Stomach (tissue), 19 donors: ENCODE measurements at regions of chrX and their contacts with region 1.

Region 1: DNA sequence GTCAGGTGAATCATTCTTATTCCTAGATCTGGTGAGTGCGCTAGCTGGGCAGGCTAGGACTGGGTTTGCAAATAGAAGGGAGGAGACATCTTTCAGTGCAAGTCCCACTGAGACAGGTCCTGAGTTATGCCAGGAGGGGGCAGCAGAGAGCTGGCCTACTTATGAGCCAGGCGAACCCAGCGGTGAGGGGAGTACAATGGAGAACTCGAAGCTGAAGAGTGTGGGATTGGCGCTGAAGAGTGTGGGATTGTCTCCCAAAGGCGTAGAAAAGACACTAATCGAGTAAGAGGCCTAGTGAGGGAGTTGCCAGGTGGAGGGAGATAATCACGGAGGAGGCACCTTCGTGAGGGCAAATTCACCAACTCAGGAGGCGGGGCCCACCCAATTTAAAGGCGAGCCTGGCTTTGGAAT is 91.7 kb upstream of the CXorf66 start:
- DNase-seq: peak; percentile 80 to 88
- H3K4me3 ChIP-seq: no peak overlapping the region
- H3K27ac ChIP-seq: no peak overlapping the region
- H3K4me1 ChIP-seq: peaks cover 0 to 5% (median 0%) of the 10 kb centered on the region in 4 donors
- H3K27me3 ChIP-seq: no peaks in the 10 kb centered on the region
- CTCF ChIP-seq: peak in 5 of 7 experiments; percentile 57 to 69 (median 61)
- EP300 ChIP-seq: no peak
- POLR2A ChIP-seq: no peak

Region 2: GRCh38 chrX:140141444-140142029 is 84.5 kb after region 1 on chrX:
- intact Hi-C with region 1: loop called (anchors 5 kb)
- DNase-seq: peak; percentile 31 to 54
- H3K4me3 ChIP-seq: no peak overlapping the region
- H3K27ac ChIP-seq: no peak overlapping the region
- H3K4me1 ChIP-seq: no peaks in the 10 kb centered on the region
- H3K27me3 ChIP-seq: peaks cover 0 to 3% (median 0%) of the 10 kb centered on the region in 3 donors
- CTCF ChIP-seq: peak in 4 of 7 experiments; percentile 29 to 60 (median 48)
- EP300 ChIP-seq: no peak
- POLR2A ChIP-seq: no peak